HCT116 (cell line): ENCODE measurements at regions of chr19 and their contacts with region 1.

Region 1: GRCh38 chr19:15320116-15320515 is 12.2 kb downstream of the BRD4 start:
- DNase-seq: no peak
- ATAC-seq: no peak
- H3K4me3 ChIP-seq: no peak overlapping the region
- H3K27ac ChIP-seq: no peak overlapping the region
- H3K4me1 ChIP-seq: no peaks in the 10 kb centered on the region; a peak in 1 of 4 replicates
- H3K27me3 ChIP-seq: no peaks in the 10 kb centered on the region
- CTCF ChIP-seq: no peak
- POLR2A ChIP-seq: no peak
- RAD21 ChIP-seq: no peak

Region 2: GRCh38 chr19:15337202-15337601 is 17.1 kb after region 1 on chr19:
- CTCF ChIA-PET with region 1: interaction called, 5 read pairs
- POLR2A ChIA-PET with region 1: interaction called, 3 read pairs
- RAD21 ChIA-PET with region 1: no interaction called
- intact Hi-C with region 1: loop called (anchors 1 kb)
- DNase-seq: no peak
- ATAC-seq: no peak
- H3K4me3 ChIP-seq: no peak overlapping the region
- H3K27ac ChIP-seq: no peak overlapping the region
- H3K4me1 ChIP-seq: peaks cover 0 to 3% of the 10 kb centered on the region in 2 experiments; a peak in 2 of 4 replicates
- H3K27me3 ChIP-seq: no peaks in the 10 kb centered on the region
- CTCF ChIP-seq: no peak
- POLR2A ChIP-seq: no peak
- RAD21 ChIP-seq: no peak

Region 3: GRCh38 chr19:15354566-15355296 is 34.6 kb after region 1 on chr19:
- CTCF ChIA-PET with region 1: no interaction called
- POLR2A ChIA-PET with region 1: no interaction called
- RAD21 ChIA-PET with region 1: no interaction called
- intact Hi-C with region 1: loop called (anchors 2 kb)
- DNase-seq: no peak
- ATAC-seq: no peak
- H3K4me3 ChIP-seq: no peak overlapping the region
- H3K27ac ChIP-seq: no peak overlapping the region
- H3K4me1 ChIP-seq: no peaks in the 10 kb centered on the region
- H3K27me3 ChIP-seq: no peaks in the 10 kb centered on the region
- CTCF ChIP-seq: no peak
- POLR2A ChIP-seq: no peak
- RAD21 ChIP-seq: no peak